Vagina (tissue), 2 donors: ENCODE measurements at regions of chr13 and their contacts with region 1.

Region 1: DNA sequence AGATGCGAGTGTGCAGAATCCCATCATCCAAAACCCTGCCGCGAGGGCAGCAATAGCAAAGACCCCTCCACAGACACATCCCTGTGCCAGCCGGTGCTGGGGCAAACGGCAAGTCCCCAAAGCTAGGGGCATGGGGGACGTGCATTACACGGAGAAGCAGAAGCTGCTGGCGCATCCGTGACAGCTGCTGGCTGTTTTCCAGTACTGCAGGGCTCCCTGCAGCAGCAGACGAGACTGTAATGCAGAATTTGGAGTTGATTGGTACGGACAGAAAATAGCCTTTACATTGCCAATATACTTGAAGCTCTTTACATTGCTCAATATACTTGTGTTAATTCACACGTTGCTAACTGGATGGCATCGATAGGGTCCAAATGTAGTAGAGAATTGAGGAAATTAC is 77.2 kb upstream of the TMTC4 start:
- DNase-seq: no peak
- H3K4me3 ChIP-seq: no peak overlapping the region
- H3K27ac ChIP-seq: no peak overlapping the region
- H3K4me1 ChIP-seq: no peaks in the 10 kb centered on the region
- H3K27me3 ChIP-seq: no peaks in the 10 kb centered on the region
- CTCF ChIP-seq: no peak
- POLR2A ChIP-seq: no peak

Region 2: DNA sequence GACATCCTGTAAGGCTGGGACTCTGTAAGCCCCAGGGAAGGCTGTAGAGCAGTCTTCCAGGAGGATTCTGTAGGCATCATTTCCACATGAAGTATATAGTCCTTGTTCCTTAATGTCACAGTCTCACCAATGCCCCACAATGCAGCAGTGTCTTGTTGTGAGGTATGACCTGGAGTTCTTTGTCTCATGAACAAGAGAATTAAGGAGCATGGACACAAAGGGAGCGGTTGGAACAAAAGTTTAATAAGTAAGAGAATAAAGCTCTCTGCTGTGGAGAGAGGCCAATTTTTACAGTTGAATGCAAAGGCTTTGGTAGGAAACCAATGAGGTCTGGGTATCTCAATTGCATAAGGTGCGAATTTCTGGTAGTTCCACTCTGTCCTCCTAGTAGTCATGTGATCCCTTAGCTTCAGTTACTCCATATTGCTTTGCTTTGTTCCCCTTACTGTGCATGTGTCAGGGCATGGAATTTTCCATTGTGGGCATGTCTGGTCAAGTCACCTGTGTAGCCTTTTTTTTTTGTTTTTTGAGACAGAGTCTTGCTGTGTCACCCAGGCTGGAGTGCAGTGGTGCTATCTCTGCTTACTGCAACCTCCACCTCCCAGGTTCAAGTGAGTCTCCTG is 47.0 kb after region 1 on chr13:
- intact Hi-C with region 1: loop called (anchors 2 kb)
- DNase-seq: no peak
- H3K4me3 ChIP-seq: no peak overlapping the region
- H3K27ac ChIP-seq: no peak overlapping the region
- H3K4me1 ChIP-seq: no peaks in the 10 kb centered on the region
- H3K27me3 ChIP-seq: no peaks in the 10 kb centered on the region
- CTCF ChIP-seq: no peak
- POLR2A ChIP-seq: no peak